ENCODE measurements at regions of chrX and their contacts with region 1.

Region 1: DNA sequence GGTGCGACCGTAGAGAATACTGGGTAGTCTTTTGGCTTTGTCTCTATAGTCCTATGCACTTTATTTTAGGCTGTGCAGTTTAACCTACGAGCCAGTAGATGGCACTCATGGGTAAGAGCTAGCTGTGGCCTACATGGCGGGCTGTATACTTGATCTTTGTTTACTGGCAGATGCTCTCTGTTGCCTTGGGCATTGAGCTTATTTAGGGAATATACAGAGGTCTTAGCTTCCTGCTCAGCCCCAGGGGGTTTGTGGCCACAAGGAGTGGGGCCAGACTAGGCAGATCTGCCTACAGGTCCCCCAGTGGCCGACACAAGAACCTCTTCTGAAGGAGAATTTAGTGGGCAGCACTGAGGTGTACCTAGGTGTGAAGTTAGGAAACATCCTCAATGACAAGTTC is 227.6 kb upstream of the HDX start:
- DNase-seq: no peak
- H3K4me3 ChIP-seq: no peak overlapping the region
- H3K27ac ChIP-seq: no peak overlapping the region
- H3K4me1 ChIP-seq: no peaks in the 10 kb centered on the region
- H3K27me3 ChIP-seq: no peaks in the 10 kb centered on the region
- CTCF ChIP-seq: peak; percentile 60 to 68 (median 62)
- EP300 ChIP-seq: no peak
- POLR2A ChIP-seq: no peak

Region 2: DNA sequence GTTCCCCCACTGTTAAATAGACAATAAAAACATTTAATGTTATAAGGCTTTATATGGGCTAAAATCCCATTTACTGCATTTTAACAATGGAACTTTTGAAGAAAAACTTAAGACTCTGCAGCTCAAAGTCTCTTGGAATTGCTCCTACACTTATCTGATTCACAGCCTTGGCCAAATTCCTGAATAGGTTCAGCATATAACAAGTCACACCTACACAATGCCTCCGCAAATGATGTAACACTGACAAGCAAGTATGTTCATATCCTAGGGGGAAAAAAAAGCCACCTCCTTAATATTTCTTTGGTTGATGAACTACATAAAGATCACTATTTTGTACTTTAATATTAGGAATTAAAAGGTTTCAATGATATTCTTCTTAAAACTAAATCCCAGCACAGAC is 576.3 kb before region 1 on chrX:
- intact Hi-C with region 1: no loop called
- DNase-seq: no peak
- H3K4me3 ChIP-seq: no peak overlapping the region
- H3K27ac ChIP-seq: no peak overlapping the region
- H3K4me1 ChIP-seq: no peaks in the 10 kb centered on the region
- H3K27me3 ChIP-seq: no peaks in the 10 kb centered on the region
- CTCF ChIP-seq: no peak
- EP300 ChIP-seq: no peak
- POLR2A ChIP-seq: no peak

Region 3: GRCh38 chrX:84907324-84907968 is 177.6 kb after region 1 on chrX:
- intact Hi-C with region 1: loop called (anchors 10 kb)
- DNase-seq: no peak
- H3K4me3 ChIP-seq: no peak overlapping the region
- H3K27ac ChIP-seq: no peak overlapping the region
- H3K4me1 ChIP-seq: no peaks in the 10 kb centered on the region
- H3K27me3 ChIP-seq: no peaks in the 10 kb centered on the region
- CTCF ChIP-seq: peak in 1 of 3 experiments; percentile 14
- EP300 ChIP-seq: no peak
- POLR2A ChIP-seq: no peak

Region 4: GRCh38 chrX:85052636-85053343 is 323.0 kb after region 1 on chrX:
- intact Hi-C with region 1: loop called (anchors 5 kb)
- DNase-seq: no peak
- H3K4me3 ChIP-seq: no peak overlapping the region
- H3K27ac ChIP-seq: peak overlapping the region in 3 of 4 donors; percentile 26 to 63 (median 57)
- H3K4me1 ChIP-seq: peaks cover 0 to 23% (median 4%) of the 10 kb centered on the region in 4 donors
- H3K27me3 ChIP-seq: peaks cover 0 to 4% (median 0%) of the 10 kb centered on the region in 4 donors
- CTCF ChIP-seq: peak; percentile 37 to 52 (median 41)
- EP300 ChIP-seq: no peak
- POLR2A ChIP-seq: no peak

Region 5: GRCh38 chrX:85444613-85445012 is 714.8 kb after region 1 on chrX:
- intact Hi-C with region 1: no loop called
- DNase-seq: no peak
- H3K4me3 ChIP-seq: no peak overlapping the region
- H3K27ac ChIP-seq: no peak overlapping the region
- H3K4me1 ChIP-seq: no peaks in the 10 kb centered on the region
- H3K27me3 ChIP-seq: no peaks in the 10 kb centered on the region
- CTCF ChIP-seq: no peak
- EP300 ChIP-seq: no peak
- POLR2A ChIP-seq: no peak